ENCODE measurements at regions of chr17 and their contacts with region 1.

Region 1: GRCh38 chr17:75059369-75060345 is 12.6 kb downstream of the KCTD2 start:
- DNase-seq: peak in 2 of 4 experiments; percentile 17 to 60
- ATAC-seq: peak; percentile 89
- H3K4me3 ChIP-seq: no peak overlapping the region
- H3K27ac ChIP-seq: peak overlapping the region; percentile 53; the same call in 2 of the 3 replicates
- H3K4me1 ChIP-seq: peaks cover 0 to 3% of the 10 kb centered on the region in 2 experiments; a peak in 2 of 5 replicates
- H3K27me3 ChIP-seq: no peaks in the 10 kb centered on the region
- CTCF ChIP-seq: peak; percentile 46 to 72 (median 57); a peak in 5 of 6 replicates
- EP300 ChIP-seq: no peak
- POLR2A ChIP-seq: no peak
- RAD21 ChIP-seq: peak; percentile 63 to 83

Region 2: DNA sequence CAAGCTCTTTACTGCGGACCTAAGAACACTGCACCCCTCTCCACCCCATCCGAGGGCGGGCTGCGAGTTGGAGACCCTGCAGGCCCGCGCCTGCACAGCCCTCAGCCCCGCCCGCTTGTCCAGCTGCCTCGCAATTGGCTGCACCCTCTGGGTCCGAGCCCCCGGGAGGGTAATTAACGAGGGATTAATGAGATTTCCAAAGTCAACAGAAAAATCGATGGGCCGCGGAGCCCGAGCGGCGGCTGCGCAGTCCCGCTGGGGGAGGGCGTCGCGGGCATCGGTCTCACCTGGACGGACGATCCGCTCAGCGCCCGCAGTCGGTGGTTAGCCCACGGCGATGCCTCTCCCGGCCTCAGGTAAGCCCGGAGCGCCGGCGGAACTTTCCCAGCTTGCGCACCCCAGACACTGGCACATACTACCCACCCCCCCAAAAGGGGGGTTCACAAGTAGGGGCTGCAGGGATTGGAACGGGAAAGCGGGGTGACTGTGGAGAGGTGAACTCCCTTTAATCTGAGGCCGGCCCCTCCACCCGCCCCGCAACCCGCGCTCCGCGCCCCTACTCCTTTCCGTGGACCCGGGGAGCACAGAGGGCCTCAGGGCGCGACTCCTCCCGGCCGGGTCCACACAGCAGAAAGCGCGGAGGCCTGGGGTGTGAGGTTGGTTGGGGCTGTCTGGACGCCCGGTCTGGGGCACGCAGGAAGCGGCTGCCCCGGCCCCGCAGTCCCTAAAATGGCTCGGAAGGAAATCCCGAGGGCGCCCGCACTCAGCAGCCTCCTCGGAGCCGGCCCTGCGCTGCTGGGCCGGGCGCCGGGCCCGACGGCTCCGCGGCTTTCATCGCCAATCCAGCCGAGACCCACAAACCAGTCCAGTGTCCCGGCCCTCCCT is 123.8 kb before region 1 on chr17 and contains the start of gene OTOP3:
- CTCF ChIA-PET with region 1: no interaction called
- POLR2A ChIA-PET with region 1: no interaction called
- in situ Hi-C with region 1: no loop called
- intact Hi-C with region 1: no loop called
- DNase-seq: no peak
- ATAC-seq: no peak
- H3K4me3 ChIP-seq: no peak within 1 kb of the TSS
- H3K27ac ChIP-seq: no peak within 1 kb of the TSS
- H3K4me1 ChIP-seq: peaks cover 15 to 20% of the 10 kb centered on the region in 2 experiments; a peak in 4 of 5 replicates
- H3K27me3 ChIP-seq: peaks cover 6 to 19% of the 10 kb centered on the region in 2 experiments; a peak in 4 of 5 replicates
- CTCF ChIP-seq: no peak
- EP300 ChIP-seq: no peak
- POLR2A ChIP-seq: no peak
- RAD21 ChIP-seq: no peak
- polyA plus RNA-seq, gene OTOP3: not detected

Region 3: DNA sequence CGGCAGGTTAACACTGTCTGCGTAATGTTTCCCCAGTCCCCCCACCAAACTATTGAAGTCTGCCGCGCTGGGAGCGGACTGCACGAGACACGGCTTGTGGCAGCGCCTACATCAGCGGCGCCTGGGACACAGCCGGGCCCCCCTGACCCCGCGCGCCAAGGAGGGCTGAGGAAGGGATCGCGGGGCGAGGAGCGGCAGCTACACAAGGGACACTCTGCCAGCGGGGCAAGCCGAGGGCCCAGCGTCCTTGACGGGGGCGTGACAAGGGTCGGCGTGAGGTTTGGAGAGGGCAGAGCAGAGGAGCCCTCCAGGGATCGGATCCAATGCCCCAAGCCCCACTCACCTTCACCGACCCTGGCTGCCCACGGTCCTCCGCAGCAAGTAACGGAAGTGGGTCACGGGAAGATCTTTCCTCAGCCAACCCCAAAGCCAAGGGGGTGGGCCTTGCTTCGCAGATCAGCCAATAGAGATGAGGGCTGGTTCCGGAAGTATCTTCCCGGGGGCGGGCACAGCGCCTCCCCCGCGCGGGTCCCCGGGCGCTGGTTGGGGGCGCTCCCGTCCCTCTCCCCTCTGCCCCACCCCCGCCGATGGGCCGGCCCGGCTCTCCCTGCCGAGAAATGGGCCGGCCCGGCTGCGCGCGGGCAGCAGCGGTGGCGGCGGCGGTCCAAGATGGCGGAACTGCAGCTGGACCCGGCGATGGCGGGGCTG is 12.9 kb before region 1 on chr17 and contains the starts of genes ATP5PD and KCTD2:
- CTCF ChIA-PET with region 1: no interaction called
- POLR2A ChIA-PET with region 1: interaction called, 14 read pairs
- in situ Hi-C with region 1: no loop called
- intact Hi-C with region 1: no loop called
- DNase-seq: peak; percentile 97 to 99 (median 98)
- ATAC-seq: peak; percentile 98
- H3K4me3 ChIP-seq: peak within 1 kb of the TSS; percentile 100
- H3K27ac ChIP-seq: peak within 1 kb of the TSS; percentile 97
- H3K4me1 ChIP-seq: peaks cover 11 to 15% of the 10 kb centered on the region in 2 experiments
- H3K27me3 ChIP-seq: no peaks in the 10 kb centered on the region
- CTCF ChIP-seq: peak in 1 of 3 experiments; percentile 13; a peak in 1 of 6 replicates
- EP300 ChIP-seq: peak; percentile 33
- POLR2A ChIP-seq: peak; percentile 97
- RAD21 ChIP-seq: no peak
- polyA plus RNA-seq, gene ATP5PD: 786 to 828 TPM
- polyA plus RNA-seq, gene KCTD2: 1.7 to 2.3 TPM

Region 4: GRCh38 chr17:75069783-75070182 is 10.1 kb after region 1 on chr17:
- CTCF ChIA-PET with region 1: no interaction called
- POLR2A ChIA-PET with region 1: interaction called, 12 read pairs
- in situ Hi-C with region 1: no loop called
- intact Hi-C with region 1: no loop called
- DNase-seq: no peak
- ATAC-seq: no peak
- H3K4me3 ChIP-seq: no peak overlapping the region
- H3K27ac ChIP-seq: no peak overlapping the region
- H3K4me1 ChIP-seq: peaks cover 30 to 31% of the 10 kb centered on the region in 2 experiments
- H3K27me3 ChIP-seq: no peaks in the 10 kb centered on the region
- CTCF ChIP-seq: peak in 2 of 3 experiments; percentile 21 to 36; a peak in 2 of 6 replicates
- EP300 ChIP-seq: no peak
- POLR2A ChIP-seq: no peak
- RAD21 ChIP-seq: peak; percentile 51 to 56

Region 5: GRCh38 chr17:75131280-75132017 is 71.8 kb after region 1 on chr17 and contains the start of gene NT5C:
- CTCF ChIA-PET with region 1: interaction called, 3 read pairs
- POLR2A ChIA-PET with region 1: no interaction called
- in situ Hi-C with region 1: no loop called
- intact Hi-C with region 1: loop called (anchors 2 kb)
- DNase-seq: peak; percentile 86 to 92 (median 88)
- ATAC-seq: peak; percentile 90
- H3K4me3 ChIP-seq: peak within 1 kb of the TSS; percentile 90
- H3K27ac ChIP-seq: peak within 1 kb of the TSS; percentile 90
- H3K4me1 ChIP-seq: peaks cover 12 to 36% of the 10 kb centered on the region in 2 experiments; a peak in 4 of 5 replicates
- H3K27me3 ChIP-seq: no peaks in the 10 kb centered on the region
- CTCF ChIP-seq: peak; percentile 75 to 86 (median 77)
- EP300 ChIP-seq: no peak
- POLR2A ChIP-seq: peak; percentile 83
- RAD21 ChIP-seq: peak; percentile 70 to 72
- polyA plus RNA-seq, gene NT5C: 2.9 to 5.0 TPM

Region 6: DNA sequence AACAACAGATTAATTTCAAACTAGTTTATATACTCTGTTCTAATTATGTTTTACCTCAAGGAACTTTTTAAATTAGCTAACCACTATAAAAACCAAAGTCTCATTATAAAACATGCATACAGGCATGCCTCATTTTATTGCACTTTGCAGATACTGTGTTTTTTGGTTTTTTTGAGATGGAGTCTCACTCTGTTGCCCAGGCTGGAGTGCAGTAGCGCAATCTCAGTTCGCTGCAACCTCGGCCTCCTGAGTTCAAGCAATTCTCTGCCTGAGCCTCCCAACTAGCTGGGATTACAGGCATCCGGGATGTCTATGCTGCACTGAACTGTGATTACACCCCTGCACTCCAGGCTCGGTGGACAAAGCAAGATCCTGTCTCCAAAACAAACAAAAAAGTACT is 103.4 kb after region 1 on chr17:
- CTCF ChIA-PET with region 1: no interaction called
- POLR2A ChIA-PET with region 1: no interaction called
- in situ Hi-C with region 1: no loop called
- intact Hi-C with region 1: no loop called
- DNase-seq: no peak
- ATAC-seq: no peak
- H3K4me3 ChIP-seq: no peak overlapping the region
- H3K27ac ChIP-seq: no peak overlapping the region
- H3K4me1 ChIP-seq: no peaks in the 10 kb centered on the region
- H3K27me3 ChIP-seq: no peaks in the 10 kb centered on the region
- CTCF ChIP-seq: no peak
- EP300 ChIP-seq: no peak
- POLR2A ChIP-seq: no peak
- RAD21 ChIP-seq: no peak

Region 7: DNA sequence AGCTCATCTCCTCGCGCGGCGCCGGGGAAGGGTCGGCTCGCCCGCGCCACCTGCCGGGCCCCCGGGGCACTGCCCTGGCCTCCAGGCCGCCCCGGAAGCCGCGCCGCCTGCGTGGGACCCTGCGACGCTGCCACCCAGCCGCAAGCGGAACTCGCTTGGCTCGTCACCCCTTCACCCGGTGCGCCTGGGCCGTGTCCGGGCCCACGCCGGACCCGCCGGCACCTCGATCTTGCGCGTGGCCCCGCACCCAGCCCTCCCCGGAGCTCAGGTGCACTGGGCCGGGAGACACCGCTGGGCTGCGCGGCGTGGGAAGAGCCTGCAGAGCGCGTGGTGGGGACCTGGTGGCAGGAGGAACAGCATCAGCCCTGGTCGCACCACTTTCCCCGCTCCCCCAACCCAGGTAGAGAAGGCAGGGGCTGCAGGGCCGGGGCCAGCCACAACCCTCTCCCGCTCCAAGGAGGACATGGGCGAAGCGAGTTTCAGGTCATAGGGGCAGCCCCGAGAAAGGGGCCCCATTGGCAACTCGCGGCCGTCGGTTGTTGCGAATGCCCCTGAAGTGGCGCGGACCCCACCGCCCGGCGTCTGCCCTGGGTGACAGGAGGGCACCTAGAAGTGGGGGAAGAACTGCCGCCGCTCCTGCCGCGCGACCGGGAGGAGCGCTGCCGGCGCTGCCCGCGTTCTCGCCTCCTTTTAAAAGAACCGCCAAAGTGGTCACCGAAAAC is 211.7 kb after region 1 on chr17:
- CTCF ChIA-PET with region 1: no interaction called
- POLR2A ChIA-PET with region 1: no interaction called
- in situ Hi-C with region 1: no loop called
- intact Hi-C with region 1: no loop called
- DNase-seq: peak; percentile 89 to 96 (median 92)
- ATAC-seq: peak; percentile 71
- H3K4me3 ChIP-seq: peak overlapping the region; percentile 97
- H3K27ac ChIP-seq: peak overlapping the region; percentile 93
- H3K4me1 ChIP-seq: peaks cover 30 to 59% of the 10 kb centered on the region in 2 experiments; a peak in 4 of 5 replicates
- H3K27me3 ChIP-seq: no peaks in the 10 kb centered on the region
- CTCF ChIP-seq: peak; percentile 60 to 91 (median 83)
- EP300 ChIP-seq: no peak
- POLR2A ChIP-seq: peak; percentile 73; the same call in 1 of the 2 replicates
- RAD21 ChIP-seq: peak; percentile 13 to 64; a peak in 2 of 4 replicates